ENCODE measurements at regions of chr15 and their contacts with region 1.

Region 1: DNA sequence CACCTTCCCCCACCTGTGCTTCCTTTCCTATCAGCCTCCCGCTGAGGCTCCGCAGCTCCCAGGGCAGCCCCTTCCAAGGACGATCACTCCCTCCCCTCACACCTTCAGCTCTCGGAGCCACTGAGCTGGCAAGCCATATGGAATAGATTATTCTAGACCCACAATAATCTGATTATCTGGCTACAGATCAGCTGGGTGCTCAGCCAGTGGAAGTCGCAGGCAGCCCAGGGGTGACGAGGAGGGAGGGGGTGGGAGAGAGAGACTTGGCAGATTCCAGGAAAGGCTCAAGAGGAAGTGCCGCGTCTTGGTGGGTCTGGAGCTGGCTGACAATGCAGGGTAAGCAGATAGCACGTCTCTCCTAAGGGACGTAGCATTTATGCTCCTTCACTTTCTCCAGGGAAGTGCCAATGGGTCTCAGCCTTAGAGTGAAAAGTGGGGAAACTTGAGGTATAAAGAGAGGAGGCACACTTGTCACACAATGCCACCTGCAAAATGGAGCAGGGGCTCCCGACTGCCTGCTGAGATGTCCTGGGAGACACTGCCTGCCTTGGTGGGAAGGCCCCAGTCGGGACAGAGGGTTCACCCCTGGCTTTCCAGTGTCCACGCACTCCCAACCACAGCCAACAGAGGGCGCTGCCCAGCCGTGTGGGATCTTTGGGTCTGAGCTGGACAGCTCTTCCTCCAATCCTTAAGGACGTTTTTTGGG is 9.4 kb upstream of the MESP1 start:
- DNase-seq: peak; percentile 82 to 94
- ATAC-seq: peak; percentile 91
- H3K4me3 ChIP-seq: no peak overlapping the region
- H3K27ac ChIP-seq: no peak overlapping the region
- H3K4me1 ChIP-seq: no peaks in the 10 kb centered on the region
- H3K27me3 ChIP-seq: no peaks in the 10 kb centered on the region

Region 2: DNA sequence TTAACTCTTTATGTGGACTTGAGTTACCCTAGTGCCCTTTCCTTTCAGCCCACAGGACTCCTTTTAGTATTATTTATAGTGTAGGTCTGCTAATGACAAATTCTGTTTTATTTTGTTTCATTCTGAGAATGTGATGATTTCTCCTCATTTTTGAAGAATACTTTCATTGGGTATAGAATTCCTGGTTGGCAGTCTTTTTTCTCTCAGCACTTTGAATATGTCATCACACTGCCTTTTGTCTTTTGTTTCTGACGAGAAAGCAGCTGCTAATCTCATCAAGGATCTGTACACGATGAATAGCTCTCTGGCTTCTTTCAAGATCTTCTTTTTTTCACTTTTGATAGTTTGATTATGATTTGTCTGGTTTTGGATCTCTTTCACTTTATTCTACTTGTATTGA is 147.4 kb before region 1 on chr15:
- intact Hi-C with region 1: no loop called
- DNase-seq: no peak
- ATAC-seq: no peak
- H3K4me3 ChIP-seq: no peak overlapping the region
- H3K27ac ChIP-seq: no peak overlapping the region
- H3K4me1 ChIP-seq: no peaks in the 10 kb centered on the region
- H3K27me3 ChIP-seq: no peaks in the 10 kb centered on the region

Region 3: GRCh38 chr15:89874926-89875564 is 114.6 kb after region 1 on chr15:
- intact Hi-C with region 1: loop called (anchors 1 to 2 kb)
- DNase-seq: peak; percentile 88 to 94
- ATAC-seq: peak; percentile 91
- H3K4me3 ChIP-seq: no peak overlapping the region
- H3K27ac ChIP-seq: no peak overlapping the region
- H3K4me1 ChIP-seq: no peaks in the 10 kb centered on the region
- H3K27me3 ChIP-seq: no peaks in the 10 kb centered on the region